Activated CD4-positive, alpha-beta T cell treated with anti-CD3 and anti-CD28 coated beads for 36 hours (primary cell): ENCODE measurements at regions of chr7 and their contacts with region 1.

Region 1: DNA sequence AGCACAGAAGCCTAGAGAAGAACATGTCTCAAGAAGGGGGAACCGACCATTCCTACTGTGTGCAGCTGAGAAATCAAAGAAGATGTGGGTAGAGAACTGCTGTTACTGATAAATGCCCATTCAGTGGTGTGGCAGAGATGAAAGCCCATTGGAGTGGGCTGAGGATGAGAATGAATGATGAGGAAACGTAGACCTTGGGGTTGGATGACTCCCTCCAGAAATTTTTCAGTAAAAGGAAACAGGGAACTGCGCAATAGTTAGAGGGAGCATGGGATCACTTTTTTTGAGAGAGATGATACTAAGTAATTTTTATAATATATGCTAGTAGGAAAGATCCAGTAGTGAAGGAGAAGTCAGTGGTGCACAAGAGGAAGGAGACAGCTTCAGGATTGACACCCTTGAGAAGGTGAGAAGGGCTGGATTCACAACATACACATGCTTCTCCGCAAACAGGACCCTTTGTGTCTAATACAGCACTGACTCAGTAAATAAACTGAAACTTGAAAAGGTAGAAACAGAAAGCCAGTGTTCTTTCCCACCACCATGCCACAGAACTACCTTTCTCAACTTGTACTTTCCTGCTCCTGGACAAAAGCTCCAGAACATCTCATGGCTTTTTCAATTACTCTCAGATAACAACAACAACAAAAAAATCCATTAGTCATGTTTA is 104.7 kb upstream of the IL6 start:
- DNase-seq: no peak
- ATAC-seq: no peak
- H3K4me3 Mint-ChIP-seq: no peak overlapping the region
- H3K27ac Mint-ChIP-seq: no peak overlapping the region
- H3K4me1 Mint-ChIP-seq: no peaks in the 10 kb centered on the region
- H3K27me3 Mint-ChIP-seq: peaks cover 16% of the 10 kb centered on the region

Region 2: GRCh38 chr7:22565315-22565811 is 56.9 kb before region 1 on chr7:
- CTCF ChIA-PET with region 1: interaction called, 3 read pairs
- POLR2A ChIA-PET with region 1: no interaction called
- intact Hi-C with region 1: loop called in 1 of 2 experiments (anchors 5 kb)
- DNase-seq: no peak
- ATAC-seq: no peak
- H3K4me3 Mint-ChIP-seq: no peak overlapping the region
- H3K27ac Mint-ChIP-seq: no peak overlapping the region
- H3K4me1 Mint-ChIP-seq: peaks cover 49% of the 10 kb centered on the region
- H3K27me3 Mint-ChIP-seq: peaks cover 54% of the 10 kb centered on the region